CD4-positive, alpha-beta T cell (primary cell): ENCODE measurements at regions of chr22 and their contacts with region 1.

Region 1: DNA sequence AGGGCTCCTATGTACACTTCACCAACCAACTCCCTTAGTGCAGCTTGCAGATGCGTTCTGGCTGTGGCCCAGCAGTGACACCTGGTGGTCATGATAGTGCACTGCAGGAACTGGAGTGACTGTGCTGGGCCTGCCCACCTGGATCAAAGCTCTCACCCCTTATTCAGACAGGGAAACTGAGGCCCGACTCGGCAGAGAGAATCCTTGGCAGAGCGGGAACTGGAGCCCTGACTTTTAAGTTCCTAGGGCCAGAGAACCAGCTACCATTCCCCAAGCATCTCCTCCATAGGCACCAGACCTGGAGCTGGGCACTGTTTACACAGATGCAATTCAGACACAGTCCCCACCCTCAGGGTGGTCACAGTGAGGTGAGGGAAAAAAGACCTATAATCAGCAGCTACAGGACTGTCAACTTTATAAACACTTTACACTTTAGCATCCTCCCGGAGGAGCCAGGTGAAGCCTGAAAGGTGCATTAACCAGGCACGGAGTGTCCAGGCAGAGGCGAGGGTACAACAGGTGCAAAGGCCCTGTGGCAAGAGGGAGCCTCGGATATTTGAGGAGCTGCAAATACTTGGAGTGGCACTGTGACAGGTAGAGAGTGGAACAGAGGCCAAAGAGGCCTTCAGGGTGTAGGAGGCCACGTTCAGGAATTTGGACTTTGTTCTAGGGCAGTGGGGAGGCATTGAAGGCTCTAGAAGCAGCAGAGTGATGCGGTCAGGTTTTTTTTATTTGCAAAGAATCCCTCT is 22.0 kb downstream of the RHBDD3 start:
- DNase-seq: peak; percentile 49 to 78 (median 59)
- ATAC-seq: peak; percentile 95
- H3K4me3 ChIP-seq: no peak overlapping the region
- H3K4me3 Mint-ChIP-seq: no peak overlapping the region
- H3K27ac ChIP-seq: no peak overlapping the region
- H3K27ac Mint-ChIP-seq: no peak overlapping the region
- H3K4me1 ChIP-seq: peaks cover 4% of the 10 kb centered on the region
- H3K4me1 Mint-ChIP-seq: no peaks in the 10 kb centered on the region
- H3K27me3 ChIP-seq: no peaks in the 10 kb centered on the region
- H3K27me3 Mint-ChIP-seq: peaks cover 19% of the 10 kb centered on the region
- CTCF ChIP-seq: peak; percentile 96

Region 2: GRCh38 chr22:28855355-28856094 is 390.3 kb before region 1 on chr22:
- CTCF ChIA-PET with region 1: no interaction called
- POLR2A ChIA-PET with region 1: no interaction called
- intact Hi-C with region 1: loop called in 1 of 2 experiments (anchors 1 kb)
- DNase-seq: peak in 12 of 14 experiments; percentile 4 to 81 (median 22)
- ATAC-seq: peak; percentile 55
- H3K4me3 ChIP-seq: no peak overlapping the region
- H3K4me3 Mint-ChIP-seq: no peak overlapping the region
- H3K27ac ChIP-seq: no peak overlapping the region
- H3K27ac Mint-ChIP-seq: no peak overlapping the region
- H3K4me1 ChIP-seq: no peaks in the 10 kb centered on the region
- H3K4me1 Mint-ChIP-seq: no peaks in the 10 kb centered on the region
- H3K27me3 ChIP-seq: peaks cover 0 to 3% of the 10 kb centered on the region in 2 experiments
- H3K27me3 Mint-ChIP-seq: peaks cover 24% of the 10 kb centered on the region
- CTCF ChIP-seq: peak; percentile 88

Region 3: GRCh38 chr22:29154364-29155048 is 91.3 kb before region 1 on chr22:
- CTCF ChIA-PET with region 1: no interaction called
- POLR2A ChIA-PET with region 1: interaction called, 4 read pairs
- intact Hi-C with region 1: loop called (anchors 1 to 10 kb)
- DNase-seq: peak; percentile 42 to 81 (median 63)
- ATAC-seq: peak; percentile 73
- H3K4me3 ChIP-seq: no peak overlapping the region
- H3K4me3 Mint-ChIP-seq: no peak overlapping the region
- H3K27ac ChIP-seq: no peak overlapping the region
- H3K27ac Mint-ChIP-seq: no peak overlapping the region
- H3K4me1 ChIP-seq: peaks cover 6% of the 10 kb centered on the region
- H3K4me1 Mint-ChIP-seq: peaks cover 8% of the 10 kb centered on the region
- H3K27me3 ChIP-seq: peaks cover 9 to 17% of the 10 kb centered on the region in 2 experiments
- H3K27me3 Mint-ChIP-seq: peaks cover 29% of the 10 kb centered on the region
- CTCF ChIP-seq: peak; percentile 75